PC-9 (cell line): ENCODE measurements at regions of chr5 and their contacts with region 1.

Region 1: DNA sequence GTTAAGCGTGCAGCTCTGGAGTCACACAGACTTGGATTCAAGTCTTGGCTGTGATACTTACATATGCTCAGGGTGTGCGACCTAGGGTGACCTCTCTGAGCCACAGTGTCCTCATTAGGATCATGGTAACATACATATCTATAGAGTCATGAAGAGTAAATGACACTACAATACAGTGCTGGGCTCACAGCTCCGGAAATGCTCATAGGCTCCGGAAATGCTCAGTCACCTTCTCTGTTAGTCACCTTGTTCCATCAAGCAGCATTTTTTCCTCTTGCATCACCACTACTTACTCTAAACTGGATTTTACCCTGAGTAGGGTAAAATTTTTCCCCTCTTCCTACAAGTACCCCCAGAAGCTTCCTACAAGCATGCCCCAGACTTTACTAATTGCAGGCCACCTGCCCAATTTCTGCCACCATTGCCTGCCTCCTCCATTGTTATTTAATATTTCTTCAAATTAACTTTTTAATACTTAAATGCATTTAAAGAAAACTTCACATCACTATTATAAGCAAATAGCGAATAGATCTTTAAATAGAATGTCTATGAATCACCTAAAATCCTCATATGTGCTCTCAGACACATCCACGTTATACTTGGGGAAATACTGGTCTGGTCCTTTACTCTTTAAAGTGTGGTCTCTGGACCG is 147.6 kb upstream of the SPRY4 start:
- DNase-seq: peak; percentile 57 to 97
- H3K4me3 ChIP-seq: no peak overlapping the region
- H3K27ac ChIP-seq: peak overlapping the region; percentile 99
- H3K4me1 ChIP-seq: peaks cover 63% of the 10 kb centered on the region
- H3K27me3 ChIP-seq: no peaks in the 10 kb centered on the region
- CTCF ChIP-seq: no peak

Region 2: DNA sequence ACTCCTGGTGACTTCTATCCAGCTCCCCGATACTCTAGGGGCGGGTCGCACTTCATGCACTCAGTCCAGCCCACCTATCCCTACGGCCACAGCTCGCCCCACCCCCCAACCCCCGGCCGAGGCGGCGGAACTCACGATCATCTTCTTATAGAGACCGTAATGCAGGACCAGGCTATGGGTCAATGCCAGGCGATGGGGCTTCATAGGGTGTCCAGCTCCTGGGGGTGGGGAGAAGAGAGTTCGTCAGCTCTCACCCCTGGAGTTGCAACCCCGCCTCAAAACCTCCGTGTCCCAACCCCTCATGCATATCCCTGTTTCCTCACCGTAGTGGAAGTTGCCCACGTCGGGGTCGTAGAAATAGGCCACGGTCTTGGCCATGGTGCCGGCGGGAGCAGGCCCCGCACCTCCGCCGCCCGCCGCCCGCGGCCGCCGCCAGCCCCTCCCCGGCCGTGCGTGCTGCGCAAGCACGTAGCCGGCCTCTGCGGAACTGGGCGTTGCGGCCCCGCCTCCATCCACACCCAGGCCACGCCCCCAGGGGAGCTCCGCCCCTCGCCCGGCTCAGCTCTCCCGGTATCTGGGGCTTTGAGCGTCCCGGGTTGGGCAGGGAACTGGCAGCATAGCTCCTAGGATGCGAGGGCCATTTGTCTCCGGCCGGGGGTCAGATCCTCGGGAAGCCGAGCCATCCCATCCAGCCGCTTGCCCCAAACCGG is 835.9 kb before region 1 on chr5 and contains the starts of genes HDAC3 and RELL2:
- CTCF ChIA-PET with region 1: no interaction called
- POLR2A ChIA-PET with region 1: no interaction called
- intact Hi-C with region 1: no loop called
- DNase-seq: peak; percentile 70 to 95
- H3K4me3 ChIP-seq: peak within 1 kb of the TSS; percentile 79
- H3K27ac ChIP-seq: no peak within 1 kb of the TSS
- H3K4me1 ChIP-seq: peaks cover 23% of the 10 kb centered on the region
- H3K27me3 ChIP-seq: no peaks in the 10 kb centered on the region
- CTCF ChIP-seq: no peak
- total RNA-seq, gene HDAC3: 76.0 and 87.0 TPM in 2 replicates
- total RNA-seq, gene RELL2: 3.3 and 5.0 TPM in 2 replicates

Region 3: GRCh38 chr5:142363619-142363963 is 108.8 kb before region 1 on chr5:
- CTCF ChIA-PET with region 1: no interaction called
- POLR2A ChIA-PET with region 1: interaction called, 16 read pairs
- intact Hi-C with region 1: no loop called
- DNase-seq: no peak
- H3K4me3 ChIP-seq: no peak overlapping the region
- H3K27ac ChIP-seq: peak overlapping the region; percentile 94
- H3K4me1 ChIP-seq: peaks cover 60% of the 10 kb centered on the region
- H3K27me3 ChIP-seq: no peaks in the 10 kb centered on the region
- CTCF ChIP-seq: no peak

Region 4: GRCh38 chr5:142404046-142404477 is 68.4 kb before region 1 on chr5:
- CTCF ChIA-PET with region 1: no interaction called
- POLR2A ChIA-PET with region 1: no interaction called
- intact Hi-C with region 1: loop called (anchors 1 kb)
- DNase-seq: no peak
- H3K4me3 ChIP-seq: peak overlapping the region; percentile 55
- H3K27ac ChIP-seq: peak overlapping the region; percentile 87
- H3K4me1 ChIP-seq: peaks cover 57% of the 10 kb centered on the region
- H3K27me3 ChIP-seq: no peaks in the 10 kb centered on the region
- CTCF ChIP-seq: no peak

Region 5: GRCh38 chr5:142512043-142513042 is 39.9 kb after region 1 on chr5:
- CTCF ChIA-PET with region 1: no interaction called
- POLR2A ChIA-PET with region 1: no interaction called
- intact Hi-C with region 1: loop called (anchors 2 kb)
- DNase-seq: peak; percentile 82 to 97
- H3K4me3 ChIP-seq: no peak overlapping the region
- H3K27ac ChIP-seq: peak overlapping the region; percentile 77
- H3K4me1 ChIP-seq: peaks cover 51% of the 10 kb centered on the region
- H3K27me3 ChIP-seq: no peaks in the 10 kb centered on the region
- CTCF ChIP-seq: no peak

Region 6: GRCh38 chr5:142971303-142972013 is 499.0 kb after region 1 on chr5:
- CTCF ChIA-PET with region 1: no interaction called
- POLR2A ChIA-PET with region 1: no interaction called
- intact Hi-C with region 1: no loop called
- DNase-seq: no peak
- H3K4me3 ChIP-seq: no peak overlapping the region
- H3K27ac ChIP-seq: no peak overlapping the region
- H3K4me1 ChIP-seq: no peaks in the 10 kb centered on the region
- H3K27me3 ChIP-seq: no peaks in the 10 kb centered on the region
- CTCF ChIP-seq: no peak